ENCODE measurements at regions of chr6 and their contacts with region 1.

Region 1: GRCh38 chr6:132669690-132670291 is 10.8 kb upstream of the TAAR1 start:
- DNase-seq: peak in 2 of 4 experiments; percentile 10 to 16
- ATAC-seq: peak; percentile 77
- H3K4me3 ChIP-seq: no peak overlapping the region
- H3K27ac ChIP-seq: no peak overlapping the region
- H3K4me1 ChIP-seq: no peaks in the 10 kb centered on the region; a peak in 2 of 5 replicates
- H3K27me3 ChIP-seq: no peaks in the 10 kb centered on the region
- CTCF ChIP-seq: peak; percentile 33 to 67 (median 45); a peak in 4 of 6 replicates
- EP300 ChIP-seq: no peak
- POLR2A ChIP-seq: no peak
- RAD21 ChIP-seq: peak; percentile 57 to 68

Region 2: GRCh38 chr6:132300323-132300949 is 369.4 kb before region 1 on chr6:
- CTCF ChIA-PET with region 1: no interaction called
- POLR2A ChIA-PET with region 1: no interaction called
- in situ Hi-C with region 1: no loop called
- intact Hi-C with region 1: loop called (anchors 5 kb)
- DNase-seq: peak in 3 of 4 experiments; percentile 23 to 44 (median 24)
- ATAC-seq: peak; percentile 91
- H3K4me3 ChIP-seq: no peak overlapping the region
- H3K27ac ChIP-seq: no peak overlapping the region
- H3K4me1 ChIP-seq: no peaks in the 10 kb centered on the region
- H3K27me3 ChIP-seq: no peaks in the 10 kb centered on the region
- CTCF ChIP-seq: peak; percentile 45 to 62 (median 50); a peak in 5 of 6 replicates
- EP300 ChIP-seq: no peak
- POLR2A ChIP-seq: no peak
- RAD21 ChIP-seq: peak; percentile 68 to 70

Region 3: GRCh38 chr6:132598473-132598872 is 71.3 kb before region 1 on chr6:
- CTCF ChIA-PET with region 1: no interaction called
- POLR2A ChIA-PET with region 1: no interaction called
- in situ Hi-C with region 1: no loop called
- intact Hi-C with region 1: no loop called
- DNase-seq: peak; percentile 13 to 29 (median 18)
- ATAC-seq: peak; percentile 96
- H3K4me3 ChIP-seq: no peak overlapping the region
- H3K27ac ChIP-seq: no peak overlapping the region
- H3K4me1 ChIP-seq: no peaks in the 10 kb centered on the region
- H3K27me3 ChIP-seq: no peaks in the 10 kb centered on the region
- CTCF ChIP-seq: peak; percentile 31 to 57 (median 37); a peak in 4 of 6 replicates
- EP300 ChIP-seq: no peak
- POLR2A ChIP-seq: no peak
- RAD21 ChIP-seq: no peak

Region 4: GRCh38 chr6:132715204-132715603 is 45.4 kb after region 1 on chr6:
- CTCF ChIA-PET with region 1: no interaction called
- POLR2A ChIA-PET with region 1: no interaction called
- in situ Hi-C with region 1: no loop called
- intact Hi-C with region 1: loop called (anchors 5 kb)
- DNase-seq: peak in 3 of 4 experiments; percentile 15 to 45 (median 43)
- ATAC-seq: peak; percentile 93
- H3K4me3 ChIP-seq: no peak overlapping the region
- H3K27ac ChIP-seq: no peak overlapping the region
- H3K4me1 ChIP-seq: no peaks in the 10 kb centered on the region
- H3K27me3 ChIP-seq: peaks cover 0 to 20% of the 10 kb centered on the region in 2 experiments; a peak in 2 of 5 replicates
- CTCF ChIP-seq: peak; percentile 42 to 45 (median 43); a peak in 5 of 6 replicates
- EP300 ChIP-seq: no peak
- POLR2A ChIP-seq: no peak
- RAD21 ChIP-seq: peak in 1 of 2 experiments; percentile 56; a peak in 2 of 4 replicates

Region 5: GRCh38 chr6:132768051-132768517 is 98.3 kb after region 1 on chr6:
- CTCF ChIA-PET with region 1: interaction called, 4 read pairs
- POLR2A ChIA-PET with region 1: no interaction called
- in situ Hi-C with region 1: no loop called
- intact Hi-C with region 1: loop called (anchors 1 kb)
- DNase-seq: peak; percentile 42 to 67 (median 54)
- ATAC-seq: peak; percentile 99
- H3K4me3 ChIP-seq: peak overlapping the region; percentile 34
- H3K27ac ChIP-seq: no peak overlapping the region; the same call in 2 of the 3 replicates
- H3K4me1 ChIP-seq: no peaks in the 10 kb centered on the region
- H3K27me3 ChIP-seq: no peaks in the 10 kb centered on the region
- CTCF ChIP-seq: peak; percentile 69 to 92 (median 71)
- EP300 ChIP-seq: no peak
- POLR2A ChIP-seq: no peak
- RAD21 ChIP-seq: peak; percentile 80 to 83

Region 6: GRCh38 chr6:132820629-132821381 is 151.0 kb after region 1 on chr6:
- CTCF ChIA-PET with region 1: no interaction called
- POLR2A ChIA-PET with region 1: no interaction called
- in situ Hi-C with region 1: no loop called
- intact Hi-C with region 1: loop called (anchors 10 kb)
- DNase-seq: peak in 2 of 4 experiments; percentile 40 to 59
- ATAC-seq: peak; percentile 21
- H3K4me3 ChIP-seq: no peak overlapping the region
- H3K27ac ChIP-seq: peak overlapping the region; percentile 5; the same call in 1 of the 3 replicates
- H3K4me1 ChIP-seq: peaks cover 0 to 24% of the 10 kb centered on the region in 2 experiments; a peak in 2 of 5 replicates
- H3K27me3 ChIP-seq: no peaks in the 10 kb centered on the region
- CTCF ChIP-seq: no peak
- EP300 ChIP-seq: no peak
- POLR2A ChIP-seq: peak; percentile 67
- RAD21 ChIP-seq: no peak

Region 7: GRCh38 chr6:132962936-132963868 is 293.4 kb after region 1 on chr6:
- CTCF ChIA-PET with region 1: no interaction called
- POLR2A ChIA-PET with region 1: no interaction called
- in situ Hi-C with region 1: no loop called
- intact Hi-C with region 1: loop called (anchors 10 kb)
- DNase-seq: peak; percentile 58 to 77 (median 63)
- ATAC-seq: peak; percentile 95
- H3K4me3 ChIP-seq: no peak overlapping the region
- H3K27ac ChIP-seq: no peak overlapping the region
- H3K4me1 ChIP-seq: peaks cover 0 to 17% of the 10 kb centered on the region in 2 experiments; a peak in 3 of 5 replicates
- H3K27me3 ChIP-seq: no peaks in the 10 kb centered on the region
- CTCF ChIP-seq: peak; percentile 77 to 84 (median 80)
- EP300 ChIP-seq: no peak
- POLR2A ChIP-seq: no peak
- RAD21 ChIP-seq: peak; percentile 79 to 83

Region 8: GRCh38 chr6:133548414-133549159 is 878.8 kb after region 1 on chr6:
- CTCF ChIA-PET with region 1: interaction called, 4 read pairs
- POLR2A ChIA-PET with region 1: no interaction called
- in situ Hi-C with region 1: no loop called
- intact Hi-C with region 1: loop called (anchors 10 kb)
- DNase-seq: no peak
- ATAC-seq: no peak
- H3K4me3 ChIP-seq: no peak overlapping the region
- H3K27ac ChIP-seq: no peak overlapping the region
- H3K4me1 ChIP-seq: no peaks in the 10 kb centered on the region
- H3K27me3 ChIP-seq: no peaks in the 10 kb centered on the region
- CTCF ChIP-seq: no peak
- EP300 ChIP-seq: no peak
- POLR2A ChIP-seq: no peak
- RAD21 ChIP-seq: no peak

Region 9: DNA sequence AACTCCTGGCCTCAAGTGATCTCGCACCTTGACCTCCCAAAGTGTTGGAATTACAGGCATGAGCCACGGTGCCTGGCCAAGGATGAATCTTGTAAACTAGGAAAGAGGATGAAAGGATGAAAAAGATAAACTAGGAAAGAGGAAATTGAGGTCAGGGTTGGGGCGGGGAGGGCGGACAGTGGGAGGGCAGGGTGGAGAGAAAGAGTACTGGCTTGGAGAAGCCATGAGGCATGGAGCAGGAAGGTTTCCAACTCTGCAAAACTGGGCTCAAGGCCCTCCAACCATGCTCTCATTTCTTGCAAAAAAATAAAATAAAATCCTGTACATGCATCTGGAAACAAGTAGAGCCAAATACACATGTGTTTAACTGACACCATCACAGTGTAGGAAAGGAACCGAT is 1904.7 kb after region 1 on chr6:
- CTCF ChIA-PET with region 1: no interaction called
- POLR2A ChIA-PET with region 1: no interaction called
- in situ Hi-C with region 1: no loop called
- intact Hi-C with region 1: no loop called
- DNase-seq: no peak
- ATAC-seq: no peak
- H3K4me3 ChIP-seq: no peak overlapping the region
- H3K27ac ChIP-seq: no peak overlapping the region
- H3K4me1 ChIP-seq: no peaks in the 10 kb centered on the region
- H3K27me3 ChIP-seq: no peaks in the 10 kb centered on the region
- CTCF ChIP-seq: no peak
- EP300 ChIP-seq: no peak
- POLR2A ChIP-seq: no peak
- RAD21 ChIP-seq: no peak

Measured in K562 (cell line).